Dorsolateral prefrontal cortex (tissue), 120 donors: ENCODE measurements at regions of chr10 and their contacts with region 1.

Region 1: GRCh38 chr10:102729029-102730026 is 14.4 kb upstream of the WBP1L start:
- DNase-seq: peak; percentile 84 to 92 (median 88)
- H3K4me3 ChIP-seq: peak overlapping the region in 5 of 59 donors; percentile 1 to 20 (median 15)
- H3K27ac ChIP-seq: peak overlapping the region in 18 of 59 donors; percentile 7 to 66 (median 32)
- H3K27me3 ChIP-seq: no peaks in the 10 kb centered on the region
- CTCF ChIP-seq: peak; percentile 44 to 97 (median 93)

Region 2: GRCh38 chr10:101867931-101868330 is 861.4 kb before region 1 on chr10:
- intact Hi-C with region 1: no loop called
- DNase-seq: no peak
- H3K4me3 ChIP-seq: no peak overlapping the region
- H3K27ac ChIP-seq: no peak overlapping the region
- H3K27me3 ChIP-seq: no peaks in the 10 kb centered on the region
- CTCF ChIP-seq: no peak

Region 3: DNA sequence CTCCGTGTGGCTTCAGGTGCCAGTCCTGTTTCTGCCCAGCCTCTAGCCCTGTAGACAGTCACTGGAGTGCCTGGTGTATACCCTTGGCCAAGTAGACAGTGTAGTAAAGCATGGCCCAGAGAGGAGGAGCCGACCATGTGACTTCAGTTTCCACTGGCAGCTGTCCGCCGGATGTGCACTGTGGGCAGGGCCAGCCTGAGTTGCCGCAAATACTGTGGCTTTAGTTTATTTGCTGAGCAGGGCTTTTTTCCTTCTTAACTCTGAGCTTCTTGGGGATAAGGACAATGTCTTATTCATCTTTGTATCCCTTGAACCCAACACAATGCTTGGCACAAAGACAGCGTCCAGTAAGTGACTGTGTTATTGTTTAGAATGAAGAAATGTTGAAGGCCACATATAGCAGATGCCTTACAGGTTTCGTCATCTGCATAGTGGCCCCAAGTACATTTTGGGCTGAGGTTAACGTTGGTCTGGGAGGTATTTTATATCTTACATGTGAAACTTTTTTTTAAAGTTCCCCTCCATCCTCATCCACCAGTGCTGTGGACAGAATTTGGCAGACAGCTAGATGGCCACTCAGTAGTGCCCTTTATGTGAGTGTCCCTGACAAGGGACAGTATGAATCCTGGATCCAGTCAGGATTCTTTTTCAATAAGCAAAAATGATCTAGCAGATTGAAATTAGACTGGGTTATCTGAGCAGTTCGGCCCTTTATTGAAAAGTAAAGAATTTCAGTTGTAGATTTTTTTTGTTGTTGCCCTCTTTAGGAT is 67.3 kb after region 1 on chr10:
- intact Hi-C with region 1: loop called in 1 of 2 experiments (anchors 10 kb)
- DNase-seq: peak; percentile 18 to 84 (median 74)
- H3K4me3 ChIP-seq: peak overlapping the region in 6 of 59 donors; percentile 0 to 26 (median 11)
- H3K27ac ChIP-seq: peak overlapping the region in 57 of 59 donors; percentile 1 to 89 (median 67)
- H3K27me3 ChIP-seq: no peaks in the 10 kb centered on the region
- CTCF ChIP-seq: peak in 2 of 56 donors; percentile 16 to 27

Region 4: GRCh38 chr10:102835007-102835482 is 105.7 kb after region 1 on chr10:
- intact Hi-C with region 1: loop called in 1 of 2 experiments (anchors 2 kb)
- DNase-seq: peak; percentile 50 to 81 (median 70)
- H3K4me3 ChIP-seq: peak overlapping the region in 3 of 59 donors; percentile 2 to 21 (median 4)
- H3K27ac ChIP-seq: no peak overlapping the region
- H3K27me3 ChIP-seq: peaks cover 0 to 14% (median 0%) of the 10 kb centered on the region in 45 donors
- CTCF ChIP-seq: peak; percentile 44 to 93 (median 86)

Region 5: GRCh38 chr10:102853944-102854694 is 124.8 kb after region 1 on chr10 and contains the start of gene BORCS7:
- intact Hi-C with region 1: loop called in 1 of 2 experiments (anchors 5 kb)
- DNase-seq: peak; percentile 91 to 100 (median 98)
- H3K4me3 ChIP-seq: peak within 1 kb of the TSS; percentile 57 to 96 (median 83)
- H3K27ac ChIP-seq: peak within 1 kb of the TSS; percentile 74 to 100 (median 98)
- H3K27me3 ChIP-seq: no peaks in the 10 kb centered on the region
- CTCF ChIP-seq: peak in 30 of 56 donors; percentile 4 to 52 (median 26)
- total RNA-seq, gene BORCS7: 13.2 to 36.5 (median 22.8) TPM

Region 6: DNA sequence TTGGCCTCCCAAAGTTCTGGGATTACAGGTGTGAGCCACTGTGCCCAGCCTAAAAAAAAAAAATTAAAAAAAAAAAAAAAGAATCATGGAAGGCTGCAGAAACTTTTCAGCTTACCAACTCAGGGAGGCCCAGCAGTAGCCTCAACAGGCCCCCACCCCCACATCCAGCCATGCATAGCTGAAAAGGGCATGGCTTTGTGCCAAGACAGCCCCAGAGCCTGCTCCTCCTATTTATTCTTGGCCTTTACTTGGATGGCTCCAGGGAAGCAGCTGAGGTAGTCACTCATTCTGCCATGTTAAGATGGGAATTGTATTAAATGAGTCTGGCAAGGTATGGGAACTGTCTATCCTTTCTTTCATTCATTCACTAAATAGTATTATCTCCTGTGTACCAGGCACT is 175.0 kb after region 1 on chr10:
- intact Hi-C with region 1: loop called (anchors 5 kb)
- DNase-seq: no peak
- H3K4me3 ChIP-seq: no peak overlapping the region
- H3K27ac ChIP-seq: no peak overlapping the region
- H3K27me3 ChIP-seq: no peaks in the 10 kb centered on the region
- CTCF ChIP-seq: no peak

Region 7: GRCh38 chr10:103069453-103070331 is 340.4 kb after region 1 on chr10:
- intact Hi-C with region 1: loop called in 1 of 2 experiments (anchors 10 kb)
- DNase-seq: peak in 8 of 10 donors; percentile 60 to 77 (median 65)
- H3K4me3 ChIP-seq: peak overlapping the region in 1 of 59 donors; percentile 30
- H3K27ac ChIP-seq: peak overlapping the region in 11 of 59 donors; percentile 5 to 48 (median 25)
- H3K27me3 ChIP-seq: no peaks in the 10 kb centered on the region
- CTCF ChIP-seq: peak; percentile 33 to 80 (median 68)

Region 8: GRCh38 chr10:103244663-103245271 is 515.4 kb after region 1 on chr10:
- intact Hi-C with region 1: loop called in 1 of 2 experiments (anchors 10 kb)
- DNase-seq: peak; percentile 41 to 82 (median 70)
- H3K4me3 ChIP-seq: peak overlapping the region in 2 of 59 donors; percentile 6 to 31
- H3K27ac ChIP-seq: no peak overlapping the region
- H3K27me3 ChIP-seq: no peaks in the 10 kb centered on the region
- CTCF ChIP-seq: peak; percentile 52 to 96 (median 88)

Region 9: GRCh38 chr10:103870516-103870915 is 1141.2 kb after region 1 on chr10:
- intact Hi-C with region 1: no loop called
- DNase-seq: no peak
- H3K4me3 ChIP-seq: no peak overlapping the region
- H3K27ac ChIP-seq: no peak overlapping the region
- H3K27me3 ChIP-seq: no peaks in the 10 kb centered on the region
- CTCF ChIP-seq: no peak